Adrenal gland (tissue), 19 donors: ENCODE measurements at regions of chr3 and their contacts with region 1.

Region 1: DNA sequence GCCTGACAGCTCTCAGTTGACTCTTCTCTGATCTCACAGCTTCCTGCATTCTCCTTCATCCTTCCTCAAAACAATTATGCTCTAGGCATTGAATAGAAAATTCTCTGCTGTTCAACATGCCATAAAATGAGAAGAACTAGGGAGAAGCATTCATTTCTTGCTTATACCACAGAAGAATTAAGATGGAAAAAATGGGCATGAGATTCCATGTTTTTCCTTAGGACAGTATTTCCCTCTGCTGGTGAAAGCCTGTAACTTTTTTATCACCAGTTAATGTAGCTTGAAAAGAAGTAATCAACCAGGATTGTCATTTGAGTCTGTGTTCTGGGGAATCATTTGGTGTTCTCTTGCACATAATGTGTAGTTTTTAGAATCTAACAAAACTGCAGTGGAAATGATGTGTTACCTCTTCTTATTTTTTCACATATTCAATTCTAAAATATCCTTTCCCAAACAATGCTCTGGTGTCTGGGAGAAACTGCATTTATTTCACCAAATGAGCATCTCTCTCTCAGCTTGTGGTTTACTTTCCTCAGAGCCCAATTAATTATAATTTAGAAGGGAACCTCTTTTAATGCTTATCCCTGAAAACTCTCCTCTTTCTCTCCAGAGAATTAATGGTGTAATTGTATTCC is 92.8 kb upstream of the DCBLD2 start:
- DNase-seq: no peak
- H3K4me3 ChIP-seq: no peak overlapping the region
- H3K27ac ChIP-seq: no peak overlapping the region
- H3K4me1 ChIP-seq: no peaks in the 10 kb centered on the region
- H3K27me3 ChIP-seq: no peaks in the 10 kb centered on the region
- CTCF ChIP-seq: peak; percentile 59 to 89 (median 78)
- POLR2A ChIP-seq: no peak

Region 2: DNA sequence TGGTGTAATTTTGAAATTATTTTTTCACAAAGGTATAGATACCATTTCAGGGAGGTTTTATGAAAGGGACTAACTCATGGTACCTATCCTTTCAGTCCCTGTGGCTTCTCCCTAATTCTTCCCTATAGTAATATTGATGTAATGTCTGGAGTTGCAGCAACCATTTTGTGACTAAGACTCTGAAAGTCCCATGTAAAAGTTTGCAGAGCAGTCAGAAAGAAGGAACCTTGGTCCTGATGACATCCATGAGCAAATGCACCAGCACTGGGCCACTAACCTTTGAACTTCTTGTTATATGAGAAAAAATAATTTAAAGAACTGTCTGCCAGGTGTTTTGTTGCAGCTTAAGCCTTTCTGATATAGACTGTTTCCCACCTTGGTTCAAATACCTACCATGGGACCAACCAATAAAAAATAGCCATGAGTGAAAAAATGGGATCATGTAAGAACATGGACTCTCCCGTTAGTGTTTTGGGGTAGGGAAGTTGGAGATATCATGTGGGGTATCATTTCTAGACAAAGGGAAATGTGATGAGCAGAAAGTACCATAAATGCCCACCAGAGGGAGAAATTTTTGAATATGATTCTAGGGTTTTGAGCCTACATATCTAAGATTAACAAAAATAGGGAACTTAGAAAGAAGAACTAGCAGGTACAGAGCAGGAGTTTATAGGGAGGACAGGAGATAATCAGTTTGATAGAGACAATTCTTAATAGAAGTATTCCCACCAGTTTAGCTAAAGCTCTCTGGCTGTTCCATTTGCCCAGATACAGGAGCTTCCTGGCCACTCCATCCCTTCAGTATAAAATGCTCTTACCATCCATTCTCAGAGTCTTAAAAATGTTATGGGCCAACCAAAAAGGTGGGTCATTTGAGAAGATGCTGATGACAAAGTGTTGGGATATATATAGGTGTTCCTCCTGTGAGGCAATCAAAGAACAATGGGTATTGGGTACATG is 397.4 kb before region 1 on chr3:
- intact Hi-C with region 1: loop called (anchors 5 kb)
- DNase-seq: no peak
- H3K4me3 ChIP-seq: no peak overlapping the region
- H3K27ac ChIP-seq: no peak overlapping the region
- H3K4me1 ChIP-seq: peaks cover 11 to 21% of the 10 kb centered on the region in 2 donors
- H3K27me3 ChIP-seq: no peaks in the 10 kb centered on the region
- CTCF ChIP-seq: peak; percentile 41 to 76 (median 60)
- POLR2A ChIP-seq: no peak

Region 3: DNA sequence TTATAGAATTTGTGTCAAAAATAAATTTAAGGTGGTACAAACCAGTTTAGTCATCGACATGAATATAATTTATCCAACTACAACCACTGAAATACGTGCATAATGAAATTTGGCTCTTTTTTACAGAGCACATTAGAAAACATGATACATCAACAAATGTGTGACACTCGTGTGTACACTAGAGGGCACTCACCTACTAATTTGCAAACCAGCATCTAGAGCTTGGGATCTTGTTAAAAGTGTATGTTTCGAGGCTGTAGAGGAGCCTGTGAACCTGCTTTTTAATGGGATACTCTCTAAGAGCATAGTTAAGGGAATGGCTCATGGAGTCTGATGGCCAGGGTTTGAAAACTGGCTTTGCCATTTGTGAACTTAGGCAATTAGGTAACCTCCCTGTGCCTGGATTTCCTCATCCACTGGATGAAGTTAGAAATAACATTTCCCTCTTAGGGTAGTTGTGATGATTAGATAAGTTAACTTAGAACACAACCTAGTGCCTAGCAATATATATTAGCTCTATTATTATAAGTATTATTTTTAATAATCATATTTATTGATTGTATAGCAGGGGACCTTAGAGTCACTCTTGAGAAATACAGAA is 392.1 kb before region 1 on chr3:
- intact Hi-C with region 1: loop called (anchors 5 kb)
- DNase-seq: peak; percentile 26 to 71 (median 48)
- H3K4me3 ChIP-seq: no peak overlapping the region
- H3K27ac ChIP-seq: no peak overlapping the region
- H3K4me1 ChIP-seq: peaks cover 0 to 9% of the 10 kb centered on the region in 2 donors
- H3K27me3 ChIP-seq: no peaks in the 10 kb centered on the region
- CTCF ChIP-seq: peak; percentile 56 to 77 (median 72)
- POLR2A ChIP-seq: no peak

Region 4: GRCh38 chr3:98817547-98818041 is 176.7 kb before region 1 on chr3:
- intact Hi-C with region 1: loop called (anchors 2 to 5 kb)
- DNase-seq: no peak
- H3K4me3 ChIP-seq: no peak overlapping the region
- H3K27ac ChIP-seq: no peak overlapping the region
- H3K4me1 ChIP-seq: no peaks in the 10 kb centered on the region
- H3K27me3 ChIP-seq: no peaks in the 10 kb centered on the region
- CTCF ChIP-seq: peak; percentile 69 to 89 (median 84)
- POLR2A ChIP-seq: no peak

Region 5: DNA sequence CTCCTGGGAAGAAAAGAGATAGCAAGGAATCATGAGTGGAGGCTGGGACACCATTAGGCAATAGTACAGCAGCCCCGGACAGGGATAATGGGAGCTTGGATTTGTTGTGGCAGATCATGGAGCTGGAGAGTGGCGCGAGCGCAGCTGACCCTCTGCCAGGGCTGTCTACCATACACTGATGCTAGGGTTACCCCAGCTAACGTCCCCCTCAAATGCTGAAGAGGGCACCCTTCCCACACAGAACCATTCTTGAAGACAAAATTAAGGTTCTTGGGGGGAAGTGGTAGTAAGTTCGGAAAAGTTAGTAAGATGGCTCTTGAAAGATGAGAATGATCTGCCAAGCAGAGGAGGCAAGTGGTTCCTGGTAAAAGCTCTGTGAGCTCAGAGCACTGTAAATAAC is 170.0 kb before region 1 on chr3:
- intact Hi-C with region 1: loop called (anchors 2 to 5 kb)
- DNase-seq: no peak
- H3K4me3 ChIP-seq: no peak overlapping the region
- H3K27ac ChIP-seq: no peak overlapping the region
- H3K4me1 ChIP-seq: no peaks in the 10 kb centered on the region
- H3K27me3 ChIP-seq: no peaks in the 10 kb centered on the region
- CTCF ChIP-seq: peak in 1 of 6 experiments; percentile 13
- POLR2A ChIP-seq: no peak

Region 6: DNA sequence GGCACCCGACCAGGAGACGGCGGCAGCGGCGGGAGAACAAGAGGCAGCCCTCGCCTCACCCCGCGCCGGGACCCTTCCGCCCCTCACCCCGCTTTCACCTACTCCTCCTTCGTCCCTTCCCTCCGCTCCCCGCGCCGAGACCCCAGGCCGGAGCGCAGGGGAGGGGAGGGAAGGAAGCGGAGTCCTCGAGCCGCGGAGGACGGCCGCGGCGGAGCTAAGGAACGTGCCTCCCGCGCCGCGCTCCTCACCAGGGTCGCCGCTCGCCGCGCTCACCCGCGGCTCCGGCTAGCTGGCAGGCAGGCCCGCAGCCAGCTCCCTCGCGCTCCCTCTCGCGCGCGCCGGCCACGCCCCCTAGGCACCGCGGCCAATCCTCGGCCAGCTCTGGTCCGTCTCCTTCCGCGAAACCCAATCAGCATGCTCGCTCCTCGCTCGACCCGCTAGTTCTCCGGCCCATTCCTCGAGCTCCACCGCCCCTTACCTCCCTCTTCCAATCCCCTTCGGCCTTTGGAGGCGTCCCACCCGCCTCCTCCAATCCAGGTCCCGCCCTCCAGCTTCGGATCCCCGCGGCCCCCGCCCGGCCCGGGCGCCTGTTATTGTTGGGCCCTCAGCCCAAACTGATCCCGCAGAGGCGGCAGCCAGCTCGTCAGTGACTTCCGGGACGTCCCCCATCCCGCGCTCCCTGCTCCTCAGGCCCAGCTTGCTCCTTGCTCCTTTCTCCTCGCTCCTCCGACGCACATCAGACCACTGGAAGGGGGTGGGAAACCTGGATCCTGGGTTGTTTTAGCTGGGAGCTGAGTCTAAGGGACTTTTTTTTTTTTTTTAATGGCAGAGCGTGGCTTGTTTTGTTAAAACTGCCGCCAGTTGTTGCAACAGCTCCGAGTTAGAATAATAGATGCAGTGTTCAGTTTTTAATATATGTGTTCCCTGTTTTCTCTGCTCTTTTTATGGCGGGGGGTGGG is 92.6 kb before region 1 on chr3 and contains the start of gene DCBLD2:
- intact Hi-C with region 1: loop called in 1 of 2 experiments (anchors 10 kb)
- DNase-seq: peak; percentile 98 to 100 (median 99)
- H3K4me3 ChIP-seq: peak within 1 kb of the TSS in 3 of 4 donors; percentile 64 to 91 (median 65)
- H3K27ac ChIP-seq: peak within 1 kb of the TSS; percentile 50 to 91 (median 89)
- H3K4me1 ChIP-seq: peaks cover 25 to 49% of the 10 kb centered on the region in 2 donors
- H3K27me3 ChIP-seq: no peaks in the 10 kb centered on the region
- CTCF ChIP-seq: no peak
- POLR2A ChIP-seq: peak; percentile 73 to 95
- total RNA-seq, gene DCBLD2: 26.1 to 68.2 (median 44.1) TPM